Right cardiac atrium (tissue), 5 donors: ENCODE measurements at regions of chr10 and their contacts with region 1.

Region 1: DNA sequence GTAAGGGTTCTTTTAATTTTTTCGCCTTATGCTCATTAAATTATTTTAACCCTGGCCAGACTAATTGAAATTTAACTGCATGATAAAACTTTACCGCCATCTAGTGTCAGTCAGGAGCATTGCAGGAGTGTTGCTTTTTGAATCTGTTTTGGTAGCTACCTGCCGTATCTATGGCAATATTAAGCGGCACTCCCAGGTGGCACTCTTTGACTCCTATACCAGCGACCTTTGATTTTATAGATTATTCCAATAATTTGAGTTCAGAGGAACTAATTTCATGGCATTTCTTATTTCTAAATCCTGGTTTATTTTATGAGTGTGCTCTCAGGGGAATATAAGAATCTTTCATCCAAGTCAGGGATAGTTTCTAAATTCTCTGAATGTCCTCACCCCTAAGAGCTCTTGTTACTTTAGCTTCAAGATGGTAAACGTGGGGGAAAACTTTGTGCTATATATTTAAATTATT is 198.9 kb downstream of the REEP3 start:
- DNase-seq: no peak
- ATAC-seq: no peak
- H3K4me3 ChIP-seq: no peak overlapping the region
- H3K27ac ChIP-seq: no peak overlapping the region
- H3K4me1 ChIP-seq: peaks cover 3% of the 10 kb centered on the region
- H3K27me3 ChIP-seq: no peaks in the 10 kb centered on the region

Region 2: GRCh38 chr10:63166742-63167258 is 553.3 kb before region 1 on chr10:
- intact Hi-C with region 1: loop called (anchors 5 to 10 kb)
- DNase-seq: no peak
- ATAC-seq: peak; percentile 50 to 58
- H3K4me3 ChIP-seq: no peak overlapping the region
- H3K27ac ChIP-seq: no peak overlapping the region
- H3K4me1 ChIP-seq: peaks cover 7% of the 10 kb centered on the region
- H3K27me3 ChIP-seq: no peaks in the 10 kb centered on the region

Region 3: DNA sequence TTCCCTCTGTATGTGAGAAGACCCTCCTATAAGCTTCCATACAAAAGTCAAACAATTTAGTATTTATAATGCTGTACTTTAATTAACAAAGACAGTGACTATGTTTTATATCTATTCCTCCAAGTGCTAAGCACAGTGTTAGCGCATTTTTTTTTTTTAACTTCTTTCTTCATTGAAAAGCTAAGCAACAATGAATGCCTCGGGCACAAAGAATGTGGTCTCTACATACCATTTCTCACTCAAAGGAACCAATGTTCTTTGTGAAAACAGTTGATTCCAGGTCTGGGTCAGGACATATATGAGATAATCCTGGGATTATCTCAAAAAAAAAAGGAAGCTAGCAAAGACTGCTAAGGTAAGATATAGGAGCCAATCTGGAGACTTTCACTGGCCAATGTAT is 225.2 kb before region 1 on chr10:
- intact Hi-C with region 1: no loop called
- DNase-seq: no peak
- ATAC-seq: no peak
- H3K4me3 ChIP-seq: no peak overlapping the region
- H3K27ac ChIP-seq: no peak overlapping the region
- H3K4me1 ChIP-seq: peaks cover 4% of the 10 kb centered on the region
- H3K27me3 ChIP-seq: no peaks in the 10 kb centered on the region

Region 4: GRCh38 chr10:63644418-63645142 is 75.5 kb before region 1 on chr10:
- intact Hi-C with region 1: loop called in 1 of 4 experiments (anchors 5 kb)
- DNase-seq: no peak
- ATAC-seq: peak; percentile 50 to 85
- H3K4me3 ChIP-seq: no peak overlapping the region
- H3K27ac ChIP-seq: peak overlapping the region; percentile 94
- H3K4me1 ChIP-seq: peaks cover 5% of the 10 kb centered on the region
- H3K27me3 ChIP-seq: no peaks in the 10 kb centered on the region

Region 5: GRCh38 chr10:63666836-63667383 is 53.2 kb before region 1 on chr10:
- intact Hi-C with region 1: no loop called
- DNase-seq: no peak
- ATAC-seq: peak; percentile 37 to 42
- H3K4me3 ChIP-seq: no peak overlapping the region
- H3K27ac ChIP-seq: no peak overlapping the region
- H3K4me1 ChIP-seq: peaks cover 3% of the 10 kb centered on the region
- H3K27me3 ChIP-seq: no peaks in the 10 kb centered on the region